HEK293 (cell line): ENCODE measurements at regions of chr7 and their contacts with region 1.

Region 1: DNA sequence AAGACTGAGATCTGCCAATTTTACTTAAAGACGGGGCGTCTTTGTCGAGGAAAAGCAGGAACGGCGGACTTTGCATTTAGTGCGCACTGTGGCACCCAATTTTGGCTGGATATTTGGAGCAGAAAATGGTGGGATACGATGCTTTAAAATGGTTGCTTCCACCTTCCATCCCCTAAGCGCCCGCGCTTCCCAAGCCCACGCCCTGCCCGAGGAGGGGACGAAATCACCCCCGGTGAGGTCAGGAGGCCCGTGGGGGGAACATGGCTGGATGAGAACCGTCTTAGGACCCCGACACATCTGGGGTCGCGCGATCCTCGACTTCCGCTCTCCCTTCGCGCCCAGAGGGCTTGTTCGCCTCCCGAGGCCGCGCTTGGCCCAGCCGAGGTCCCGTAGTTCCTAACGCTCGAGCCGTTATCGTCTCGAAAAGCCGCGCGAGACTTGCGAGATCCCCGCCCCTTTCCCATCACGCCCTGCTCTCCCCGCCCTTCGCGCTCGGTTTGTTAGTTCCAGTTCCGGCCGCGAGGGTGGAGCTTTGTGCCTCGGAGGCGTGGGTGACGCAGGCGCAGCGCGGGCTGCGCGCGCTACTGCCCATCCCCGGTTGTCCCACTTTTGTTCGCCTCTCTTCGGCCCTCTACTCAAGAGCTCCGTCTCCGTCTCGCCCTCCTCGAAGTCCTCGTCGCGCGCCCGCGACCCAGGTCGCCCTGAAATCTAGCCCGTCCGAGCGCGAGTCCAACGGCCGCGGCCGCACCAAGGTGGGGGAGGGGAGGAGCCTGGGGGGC is at the start of gene SRRT:
- H3K4me3 ChIP-seq: peak within 1 kb of the TSS; percentile 68
- H3K27ac ChIP-seq: peak within 1 kb of the TSS; percentile 78
- H3K4me1 ChIP-seq: no peaks in the 10 kb centered on the region
- CTCF ChIP-seq: peak; percentile 78

Region 2: GRCh38 chr7:100745184-100745583 is 129.6 kb before region 1 on chr7:
- CTCF ChIA-PET with region 1: no interaction called
- POLR2A ChIA-PET with region 1: no interaction called
- H3K4me3 ChIP-seq: no peak overlapping the region
- H3K27ac ChIP-seq: no peak overlapping the region
- H3K4me1 ChIP-seq: no peaks in the 10 kb centered on the region
- CTCF ChIP-seq: no peak

Region 3: GRCh38 chr7:100827330-100828227 is 47.2 kb before region 1 on chr7 and contains the start of gene EPHB4:
- CTCF ChIA-PET with region 1: no interaction called
- POLR2A ChIA-PET with region 1: interaction called, 16 read pairs
- H3K4me3 ChIP-seq: peak within 1 kb of the TSS; percentile 82
- H3K27ac ChIP-seq: peak within 1 kb of the TSS; percentile 91; the same call in 1 of the 2 replicates
- H3K4me1 ChIP-seq: no peaks in the 10 kb centered on the region
- CTCF ChIP-seq: peak; percentile 98